ENCODE measurements at regions of chr1 and their contacts with region 1.

Region 1: DNA sequence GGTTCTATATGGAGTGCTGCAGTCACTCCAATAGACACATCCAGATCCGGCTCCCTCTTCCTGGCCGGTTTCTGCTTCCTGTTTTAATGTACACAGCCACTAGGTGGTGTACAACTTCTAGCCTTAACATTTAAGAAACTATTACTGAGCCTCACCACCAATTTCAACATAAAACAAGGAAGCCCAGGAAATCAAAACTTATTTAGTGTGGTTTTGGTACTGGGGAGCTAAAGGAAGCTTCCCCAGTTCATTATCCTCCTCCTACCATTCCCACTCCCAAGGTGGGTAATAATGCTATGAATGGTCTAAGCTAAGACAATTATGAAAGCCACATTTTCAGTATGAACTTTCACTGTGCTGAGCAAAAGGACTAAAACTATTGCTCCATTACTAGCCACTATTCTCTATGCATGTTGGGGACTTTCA is 25.5 kb upstream of the MTMR11 start:
- DNase-seq: no peak

Region 2: DNA sequence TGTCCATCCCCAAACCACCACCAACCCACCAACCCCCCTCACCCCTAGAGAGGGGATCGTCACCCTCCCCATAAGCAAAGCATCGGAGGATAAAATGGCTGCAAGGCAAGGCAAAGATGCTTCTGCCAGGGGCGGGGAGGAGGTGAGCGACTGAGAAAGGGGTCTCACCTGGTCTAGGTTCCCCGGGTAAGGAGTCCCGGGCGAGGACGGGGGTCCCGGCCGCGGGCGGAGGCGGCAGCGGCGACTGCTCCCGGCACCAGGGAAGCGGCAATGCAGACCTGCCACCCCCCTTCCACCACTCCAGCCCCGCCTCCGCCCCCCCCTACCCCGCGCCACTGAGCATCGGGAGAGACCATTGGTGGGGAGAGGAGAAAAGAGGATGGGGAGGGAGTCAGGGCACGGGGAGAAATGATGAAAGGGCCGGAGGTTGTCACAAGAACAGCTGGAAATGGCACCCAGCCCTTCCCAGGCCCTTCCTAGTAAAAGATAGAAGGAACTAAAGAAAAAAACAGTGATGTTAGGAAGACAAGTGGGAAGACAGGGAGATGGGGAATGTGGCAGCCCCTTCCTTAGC is 44.5 kb before region 1 on chr1 and contains the start of gene SV2A:
- intact Hi-C with region 1: no loop called
- DNase-seq: no peak
- total RNA-seq, gene SV2A: 7.5 TPM

Region 3: GRCh38 chr1:150053926-150054325 is 91.8 kb after region 1 on chr1:
- intact Hi-C with region 1: loop called in 1 of 2 experiments (anchors 1 kb)
- DNase-seq: no peak

Region 4: GRCh38 chr1:150162862-150163706 is 200.9 kb after region 1 on chr1:
- intact Hi-C with region 1: loop called in 1 of 2 experiments (anchors 10 kb)
- DNase-seq: peak; percentile 95

Region 5: DNA sequence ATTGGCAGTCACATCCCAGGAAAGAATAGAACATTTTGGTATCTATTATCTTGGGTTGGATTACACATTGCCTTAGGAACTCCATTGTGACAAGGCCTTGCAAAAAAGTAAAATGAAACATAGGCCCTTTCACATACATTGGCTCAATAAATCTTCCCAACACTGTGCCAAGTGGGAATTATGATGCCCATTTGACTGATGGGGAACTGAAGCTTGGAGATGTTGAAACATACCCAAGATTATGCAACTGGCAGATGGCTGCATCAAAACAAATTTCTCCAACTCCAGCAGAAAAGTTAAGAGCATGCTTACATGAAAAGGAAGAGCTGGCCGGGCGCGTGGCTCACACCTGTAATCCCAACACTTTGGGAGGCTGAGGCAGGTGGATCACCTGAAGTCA is 214.5 kb after region 1 on chr1:
- intact Hi-C with region 1: loop called in 1 of 2 experiments (anchors 5 kb)
- DNase-seq: no peak

Region 6: DNA sequence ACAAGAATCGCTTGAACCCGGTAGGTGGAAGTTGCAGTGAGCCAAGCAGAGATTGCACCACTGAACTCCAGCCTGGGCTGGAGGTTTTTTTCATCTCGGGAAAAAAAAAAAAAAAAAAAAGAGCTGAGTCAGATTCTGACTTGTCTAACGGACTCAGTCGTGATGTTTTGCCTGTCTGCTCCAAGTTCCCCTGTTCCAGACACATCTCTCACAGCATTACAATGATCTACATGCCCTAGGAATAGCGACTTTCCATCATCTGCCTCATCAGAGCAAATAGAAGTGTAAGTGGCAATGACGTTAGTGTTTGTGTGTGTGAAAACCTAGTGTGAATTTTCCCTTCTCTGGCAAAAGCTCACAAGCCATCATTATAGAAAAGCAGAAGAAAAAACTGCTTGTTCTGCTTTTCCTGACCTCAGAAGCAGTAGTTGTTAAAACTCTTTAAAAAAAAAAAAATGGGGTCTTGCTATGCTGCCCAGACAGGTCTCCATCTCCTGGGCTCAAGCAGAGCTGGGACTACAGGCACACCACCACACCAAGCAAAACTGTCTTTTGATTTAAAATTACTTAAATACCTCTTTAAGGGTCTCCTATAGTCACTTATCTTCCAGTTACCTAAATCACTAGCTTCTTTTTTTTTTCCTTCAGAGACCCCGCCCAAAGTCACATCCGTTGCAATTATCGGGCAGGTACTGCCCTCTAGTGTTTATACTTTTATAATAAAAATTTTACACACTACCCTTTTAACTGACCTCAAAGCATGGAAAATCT is 224.8 kb after region 1 on chr1:
- intact Hi-C with region 1: loop called in 1 of 2 experiments (anchors 5 kb)
- DNase-seq: no peak

Measured in posterior vena cava (tissue), 2 donors.